Common myeloid progenitor, CD34-positive (primary cell): ENCODE measurements at regions of chr3 and their contacts with region 1.

Region 1: DNA sequence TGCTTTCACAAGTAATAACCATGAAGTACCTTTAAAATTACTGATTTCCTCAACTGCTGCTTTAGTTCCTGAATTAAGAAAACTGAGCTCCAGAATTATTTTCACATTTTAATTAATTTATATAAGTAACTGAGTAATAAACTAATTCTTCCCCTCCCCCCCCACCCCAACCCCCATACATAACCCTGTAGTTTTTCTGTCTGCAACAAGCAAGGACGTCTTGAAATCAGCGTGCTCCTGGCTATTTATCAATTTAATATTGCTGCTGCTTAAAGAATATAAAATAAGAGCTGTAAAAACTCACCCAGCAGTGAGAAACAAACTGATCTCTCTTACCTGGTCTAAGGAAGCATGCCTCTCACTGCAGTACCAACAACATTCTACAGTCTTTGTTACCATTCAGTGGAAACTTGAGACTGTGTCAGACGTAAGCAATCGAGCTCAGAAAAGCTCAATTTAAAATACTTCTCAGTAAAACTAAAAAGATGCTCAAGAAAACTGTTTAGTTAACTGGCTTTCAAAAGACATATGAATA is 121.0 kb downstream of the TFDP2 start:
- DNase-seq: peak; percentile 90 to 97 (median 96)
- H3K4me3 ChIP-seq: peak overlapping the region in 6 of 7 experiments; percentile 74 to 92 (median 83)
- H3K27ac ChIP-seq: peak overlapping the region; percentile 64 to 86
- H3K4me1 ChIP-seq: peaks cover 5 to 25% (median 15%) of the 10 kb centered on the region in 4 experiments
- H3K27me3 ChIP-seq: no peaks in the 10 kb centered on the region

Region 2: GRCh38 chr3:141955175-141955574 is 73.1 kb before region 1 on chr3:
- CTCF ChIA-PET with region 1: no interaction called
- POLR2A ChIA-PET with region 1: no interaction called
- DNase-seq: peak in 2 of 3 donors; percentile 39 to 50
- H3K4me3 ChIP-seq: peak overlapping the region in 2 of 7 experiments; percentile 8 to 44
- H3K27ac ChIP-seq: peak overlapping the region in 1 of 2 experiments; percentile 46
- H3K4me1 ChIP-seq: peaks cover 0 to 9% (median 4%) of the 10 kb centered on the region in 4 experiments
- H3K27me3 ChIP-seq: no peaks in the 10 kb centered on the region

Region 3: DNA sequence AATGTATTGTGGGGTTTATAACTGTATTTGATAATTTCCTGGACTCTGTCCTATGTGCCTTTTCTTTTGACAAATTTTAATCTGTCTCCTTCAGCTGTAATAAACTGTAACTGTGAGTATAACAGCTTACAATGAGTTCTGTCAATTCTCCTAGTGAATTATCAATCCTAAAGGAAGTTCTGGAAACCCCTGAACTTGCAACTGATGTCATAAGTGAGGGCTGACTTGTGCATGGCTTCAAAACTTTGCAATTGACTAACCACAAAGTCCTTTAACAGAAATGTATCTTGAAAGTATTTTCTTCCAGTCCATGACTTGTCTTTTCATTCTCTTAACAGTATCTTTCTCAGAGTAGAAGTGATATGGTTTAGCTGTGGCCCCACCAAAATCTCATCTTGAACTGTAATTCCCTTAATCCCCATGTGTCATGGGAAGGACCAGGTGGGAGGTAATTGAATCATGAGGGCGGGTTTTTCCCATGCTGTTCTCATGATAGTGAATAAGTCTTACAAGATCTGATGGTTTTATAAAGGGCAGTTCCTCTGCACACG is 12.7 kb after region 1 on chr3:
- CTCF ChIA-PET with region 1: interaction called, 32 read pairs
- POLR2A ChIA-PET with region 1: interaction called, 4 read pairs
- DNase-seq: peak in 1 of 3 donors; percentile 60
- H3K4me3 ChIP-seq: no peak overlapping the region
- H3K27ac ChIP-seq: no peak overlapping the region
- H3K4me1 ChIP-seq: peaks cover 4 to 18% (median 13%) of the 10 kb centered on the region in 4 experiments
- H3K27me3 ChIP-seq: no peaks in the 10 kb centered on the region